Caco-2 (cell line): ENCODE measurements at regions of chr5 and their contacts with region 1.

Region 1: DNA sequence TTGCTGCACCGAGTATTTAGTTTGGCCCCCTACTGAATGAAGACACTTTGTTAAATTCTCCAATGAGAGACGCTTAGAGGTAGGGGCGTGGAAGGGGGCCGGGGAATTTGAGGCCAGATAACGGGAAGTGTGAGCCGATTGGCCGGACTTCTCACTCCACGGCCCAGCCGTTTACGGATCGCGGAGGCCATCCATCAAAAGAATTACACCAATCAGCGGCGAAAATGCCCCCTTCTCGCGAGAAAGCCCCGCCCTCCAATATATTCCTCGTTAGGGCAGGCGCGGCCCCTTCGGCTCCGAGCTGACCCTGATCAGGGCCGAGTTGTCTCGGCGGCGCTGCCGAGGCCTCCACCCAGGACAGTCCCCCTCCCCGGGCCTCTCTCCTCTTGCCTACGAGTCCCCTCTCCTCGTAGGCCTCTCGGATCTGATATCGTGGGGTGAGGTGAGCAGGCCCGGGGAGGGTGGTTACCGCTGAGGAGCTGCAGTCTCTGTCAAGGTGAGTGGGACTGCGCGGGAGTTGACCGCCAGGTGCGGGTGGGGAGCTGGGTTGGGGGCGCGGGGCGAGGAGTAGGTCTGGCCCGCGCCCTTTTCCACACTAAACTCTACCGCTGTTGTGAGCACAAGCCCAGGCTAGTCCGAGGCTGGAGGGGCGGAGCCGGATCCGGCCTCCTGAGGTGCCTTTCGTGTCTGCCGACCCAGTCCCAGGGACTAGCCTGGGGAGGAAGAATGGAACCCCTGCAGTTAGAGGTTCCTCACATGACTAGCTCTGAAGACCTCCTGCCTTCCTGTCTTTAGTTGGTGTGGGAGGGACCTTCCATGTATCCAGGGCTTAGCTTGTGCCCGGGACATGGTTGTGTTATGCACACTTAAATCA is at the start of gene CCNG1:
- DNase-seq: peak; percentile 97 to 98
- H3K4me3 ChIP-seq: peak within 1 kb of the TSS; percentile 74
- H3K4me3 Mint-ChIP-seq: peak within 1 kb of the TSS; percentile 90
- H3K27ac Mint-ChIP-seq: peak within 1 kb of the TSS; percentile 89
- H3K4me1 ChIP-seq: peaks cover 7% of the 10 kb centered on the region; the same call in 1 of the 2 replicates
- H3K4me1 Mint-ChIP-seq: peaks cover 8% of the 10 kb centered on the region
- H3K27me3 ChIP-seq: no peaks in the 10 kb centered on the region
- H3K27me3 Mint-ChIP-seq: no peaks in the 10 kb centered on the region
- CTCF ChIP-seq: peak in 1 of 2 experiments; percentile 1
- total RNA-seq, gene CCNG1: 175 and 181 TPM in 2 replicates

Region 2: DNA sequence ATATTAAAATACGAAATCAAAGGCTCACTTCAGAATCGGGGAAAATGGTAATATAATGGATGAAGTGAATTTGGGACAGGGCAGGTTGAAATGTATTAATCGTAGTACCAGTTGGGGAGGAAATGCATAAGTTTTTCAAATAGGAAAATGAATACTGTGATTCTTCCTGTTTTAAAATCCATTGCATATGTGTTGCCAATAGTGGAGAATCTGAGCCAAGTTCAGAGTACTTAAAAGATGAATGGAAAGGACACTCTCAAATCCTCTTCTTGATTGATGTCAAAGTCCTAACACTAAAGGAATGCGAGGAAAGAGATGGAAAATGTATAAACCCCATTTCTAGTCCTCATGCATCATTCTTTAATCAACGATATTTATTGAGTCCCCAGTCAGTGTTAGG is 161.1 kb before region 1 on chr5:
- CTCF ChIA-PET with region 1: no interaction called
- POLR2A ChIA-PET with region 1: no interaction called
- intact Hi-C with region 1: no loop called
- DNase-seq: no peak
- H3K4me3 ChIP-seq: no peak overlapping the region
- H3K4me3 Mint-ChIP-seq: no peak overlapping the region
- H3K27ac Mint-ChIP-seq: no peak overlapping the region
- H3K4me1 ChIP-seq: no peaks in the 10 kb centered on the region
- H3K4me1 Mint-ChIP-seq: no peaks in the 10 kb centered on the region
- H3K27me3 ChIP-seq: no peaks in the 10 kb centered on the region
- H3K27me3 Mint-ChIP-seq: peaks cover 2% of the 10 kb centered on the region
- CTCF ChIP-seq: no peak

Region 3: DNA sequence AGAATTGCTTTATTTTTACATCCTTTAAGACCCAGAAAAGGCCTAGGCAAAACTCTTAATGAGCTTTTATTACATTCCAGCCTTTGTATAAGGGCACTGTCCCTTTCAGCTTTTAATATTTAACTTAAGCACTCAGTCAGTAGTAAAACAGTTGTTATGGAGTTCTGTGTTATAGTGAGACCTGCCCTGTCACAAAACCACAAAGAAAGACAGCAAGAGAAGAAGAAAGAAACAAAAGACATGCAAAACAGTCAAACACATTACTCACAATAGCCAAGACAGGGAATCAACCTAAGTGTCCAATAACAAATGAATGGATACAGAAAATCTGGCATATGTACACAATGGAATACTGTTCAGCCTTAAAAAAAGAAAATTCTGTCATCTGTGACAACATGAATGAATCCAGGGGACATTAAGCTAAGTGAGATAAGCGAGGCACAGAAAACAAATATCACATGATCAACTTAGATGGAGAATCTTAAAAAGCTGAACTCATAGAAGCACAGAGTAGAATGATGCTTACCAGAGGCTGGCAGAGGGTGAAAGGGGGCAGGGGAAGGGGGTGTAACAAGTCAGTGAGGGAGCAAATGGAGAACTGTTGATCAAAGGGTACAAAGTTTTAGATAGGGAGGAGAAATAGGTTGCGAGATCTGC is 64.0 kb before region 1 on chr5:
- CTCF ChIA-PET with region 1: no interaction called
- POLR2A ChIA-PET with region 1: no interaction called
- intact Hi-C with region 1: loop called (anchors 2 kb)
- DNase-seq: peak in 1 of 2 experiments; percentile 28
- H3K4me3 ChIP-seq: no peak overlapping the region
- H3K4me3 Mint-ChIP-seq: peak overlapping the region; percentile 45
- H3K27ac Mint-ChIP-seq: peak overlapping the region; percentile 32
- H3K4me1 ChIP-seq: peaks cover 35% of the 10 kb centered on the region
- H3K4me1 Mint-ChIP-seq: peaks cover 32% of the 10 kb centered on the region
- H3K27me3 ChIP-seq: no peaks in the 10 kb centered on the region
- H3K27me3 Mint-ChIP-seq: no peaks in the 10 kb centered on the region
- CTCF ChIP-seq: no peak

Region 4: GRCh38 chr5:163505368-163506094 is 68.0 kb after region 1 on chr5 and contains the start of gene MAT2B:
- CTCF ChIA-PET with region 1: no interaction called
- POLR2A ChIA-PET with region 1: interaction called, 3 read pairs
- intact Hi-C with region 1: loop called (anchors 1 kb)
- DNase-seq: peak; percentile 94 to 95
- H3K4me3 ChIP-seq: peak within 1 kb of the TSS; percentile 72
- H3K4me3 Mint-ChIP-seq: peak within 1 kb of the TSS; percentile 85
- H3K27ac Mint-ChIP-seq: peak within 1 kb of the TSS; percentile 94
- H3K4me1 ChIP-seq: peaks cover 29% of the 10 kb centered on the region
- H3K4me1 Mint-ChIP-seq: peaks cover 12% of the 10 kb centered on the region
- H3K27me3 ChIP-seq: no peaks in the 10 kb centered on the region
- H3K27me3 Mint-ChIP-seq: no peaks in the 10 kb centered on the region
- CTCF ChIP-seq: peak; percentile 32 to 75
- total RNA-seq, gene MAT2B: 23.4 and 25.1 TPM in 2 replicates

Region 5: DNA sequence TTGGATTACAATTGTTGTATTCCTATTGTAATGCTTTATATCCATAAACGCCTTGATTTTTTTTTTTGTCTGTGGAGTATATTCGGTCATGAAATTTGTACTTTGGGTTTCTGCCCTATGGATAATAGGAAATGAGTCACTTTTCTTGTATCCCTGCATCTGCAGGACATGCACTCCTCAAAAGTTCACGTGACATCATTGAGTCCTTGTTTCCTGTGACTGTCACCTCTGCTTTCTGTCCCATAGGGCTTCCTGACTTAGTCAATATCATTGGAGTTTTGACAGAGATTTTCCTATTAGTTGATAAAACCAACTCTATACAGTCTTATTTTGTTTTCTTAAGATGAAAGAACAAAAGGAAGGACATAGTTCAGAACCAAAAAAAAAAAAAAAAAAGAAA is 424.1 kb after region 1 on chr5:
- CTCF ChIA-PET with region 1: no interaction called
- POLR2A ChIA-PET with region 1: no interaction called
- intact Hi-C with region 1: no loop called
- DNase-seq: no peak
- H3K4me3 ChIP-seq: no peak overlapping the region
- H3K4me3 Mint-ChIP-seq: no peak overlapping the region
- H3K27ac Mint-ChIP-seq: no peak overlapping the region
- H3K4me1 ChIP-seq: no peaks in the 10 kb centered on the region
- H3K4me1 Mint-ChIP-seq: no peaks in the 10 kb centered on the region
- H3K27me3 ChIP-seq: no peaks in the 10 kb centered on the region
- H3K27me3 Mint-ChIP-seq: no peaks in the 10 kb centered on the region
- CTCF ChIP-seq: no peak